ENCODE measurements at regions of chr1 and their contacts with region 1.

Region 1: DNA sequence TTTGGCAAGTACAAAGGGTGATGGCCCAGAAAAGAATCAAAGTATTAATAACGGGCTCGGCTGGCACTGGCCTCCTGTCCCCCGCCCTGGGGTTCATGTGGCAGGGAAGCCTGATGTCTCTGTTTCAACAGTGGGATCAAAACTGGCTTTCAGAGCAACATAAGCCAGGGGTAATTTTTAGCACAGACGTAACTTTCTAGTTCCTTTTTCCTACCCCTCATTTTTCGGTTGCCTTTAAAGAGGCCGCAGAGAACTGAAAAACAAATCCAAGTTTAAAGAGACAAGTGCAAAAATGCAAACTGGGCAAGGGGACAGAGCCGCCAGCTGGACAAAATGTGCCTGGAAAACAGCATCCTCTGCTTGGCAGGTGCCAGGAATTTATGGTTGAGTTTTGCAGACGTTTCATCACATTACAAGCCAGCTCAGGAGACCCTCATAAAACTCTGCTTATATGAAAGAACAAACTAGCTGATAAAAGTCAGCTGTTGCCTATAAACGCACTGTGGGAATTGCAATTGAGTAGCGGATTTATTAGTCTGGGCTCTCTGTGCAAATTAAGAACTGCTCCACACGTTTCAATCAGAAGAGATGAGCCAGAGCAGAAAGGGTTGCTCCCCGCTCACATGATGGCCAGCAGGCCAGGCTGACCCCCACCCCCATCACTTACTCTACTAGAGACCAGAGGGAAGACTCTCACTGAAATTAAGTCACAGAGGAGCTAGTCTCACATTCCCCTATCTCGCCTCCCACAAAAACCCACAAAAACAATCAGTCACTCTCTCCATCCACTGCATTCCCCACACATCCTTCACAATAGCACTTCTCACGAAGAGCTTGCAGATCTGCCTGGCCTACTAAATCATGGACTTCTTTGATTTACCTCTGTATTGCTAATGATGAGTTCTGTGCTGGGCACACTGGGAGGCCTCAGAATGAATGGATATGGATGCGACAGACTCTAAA is 15.8 kb upstream of the CDCA8 start:
- DNase-seq: no peak
- H3K4me3 ChIP-seq: no peak overlapping the region
- H3K4me3 Mint-ChIP-seq: no peak overlapping the region
- H3K27ac ChIP-seq: peak overlapping the region in 1 of 2 donors; percentile 20
- H3K27ac Mint-ChIP-seq: peak overlapping the region in 3 of 7 donors; percentile 38 to 72 (median 60)
- H3K4me1 ChIP-seq: peaks cover 12 to 18% of the 10 kb centered on the region in 2 donors
- H3K4me1 Mint-ChIP-seq: peaks cover 33% of the 10 kb centered on the region
- H3K27me3 ChIP-seq: no peaks in the 10 kb centered on the region
- H3K27me3 Mint-ChIP-seq: peaks cover 1 to 3% (median 2%) of the 10 kb centered on the region in 3 donors
- CTCF ChIP-seq: no peak

Region 2: DNA sequence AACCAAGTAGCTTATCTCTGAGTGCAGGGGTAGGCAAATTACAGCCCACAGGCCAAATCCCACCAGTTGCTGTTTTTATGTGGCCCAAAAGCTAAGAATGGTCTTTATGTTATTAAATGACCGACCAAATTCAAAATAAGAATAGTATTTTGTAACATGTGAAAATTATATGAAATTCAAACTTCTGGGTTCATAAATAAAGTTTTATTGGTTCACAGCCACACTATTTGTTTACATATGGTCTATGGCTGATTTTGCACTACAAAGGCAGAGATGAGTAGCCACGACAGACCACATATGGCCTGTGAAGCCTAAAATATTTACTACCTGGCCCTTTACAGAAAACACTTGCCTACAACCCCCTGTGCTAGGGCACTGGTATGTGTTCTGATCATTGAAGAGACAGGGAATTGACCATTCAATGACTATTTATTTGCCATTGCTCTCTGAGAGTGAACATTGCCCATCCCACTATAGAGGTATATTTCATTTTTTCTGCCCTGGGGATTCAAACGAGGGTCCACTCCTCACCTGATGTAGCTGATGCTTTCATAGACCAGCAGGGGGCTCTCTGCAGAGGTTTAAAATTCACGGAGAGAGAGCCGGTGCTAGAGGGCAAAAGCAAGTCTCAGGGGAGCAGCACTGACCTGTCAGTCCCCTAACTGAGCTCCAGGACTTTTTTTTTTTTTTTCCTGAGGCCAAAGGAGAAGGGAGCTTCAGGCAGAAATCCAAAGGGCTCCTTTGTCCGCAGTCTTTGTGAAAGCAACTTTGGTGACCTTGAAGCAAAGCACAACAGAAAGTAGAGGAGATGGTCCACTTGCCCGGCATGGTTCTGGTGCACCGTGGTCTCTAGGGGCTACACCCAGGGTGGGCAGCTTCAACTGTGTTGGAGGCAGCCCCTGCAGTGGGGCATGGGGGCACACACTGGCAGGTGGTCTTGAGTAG is 73.5 kb before region 1 on chr1:
- intact Hi-C with region 1: loop called (anchors 2 to 5 kb)
- DNase-seq: peak; percentile 24 to 51 (median 38)
- H3K4me3 ChIP-seq: no peak overlapping the region
- H3K4me3 Mint-ChIP-seq: no peak overlapping the region
- H3K27ac ChIP-seq: no peak overlapping the region
- H3K27ac Mint-ChIP-seq: peak overlapping the region in 1 of 7 donors; percentile 11
- H3K4me1 ChIP-seq: peaks cover 12 to 14% of the 10 kb centered on the region in 2 donors
- H3K4me1 Mint-ChIP-seq: peaks cover 4% of the 10 kb centered on the region
- H3K27me3 ChIP-seq: peaks cover 0 to 2% of the 10 kb centered on the region in 2 donors
- H3K27me3 Mint-ChIP-seq: peaks cover 6 to 13% (median 7%) of the 10 kb centered on the region in 3 donors
- CTCF ChIP-seq: peak; percentile 87